A549 (cell line): ENCODE measurements at regions of chr5 and their contacts with region 1.

Region 1: GRCh38 chr5:10627160-10627701 is 63.4 kb downstream of the ANKRD33B start:
- DNase-seq: no peak
- ATAC-seq: peak; percentile 33 to 43; a peak in 5 of 6 replicates
- H3K4me3 ChIP-seq: peak overlapping the region; percentile 24
- H3K27ac ChIP-seq: peak overlapping the region; percentile 51 to 80
- H3K4me1 ChIP-seq: peaks cover 17% of the 10 kb centered on the region
- CTCF ChIP-seq: no peak
- EP300 ChIP-seq: no peak
- POLR2A ChIP-seq: no peak
- RAD21 ChIP-seq: no peak

Region 2: DNA sequence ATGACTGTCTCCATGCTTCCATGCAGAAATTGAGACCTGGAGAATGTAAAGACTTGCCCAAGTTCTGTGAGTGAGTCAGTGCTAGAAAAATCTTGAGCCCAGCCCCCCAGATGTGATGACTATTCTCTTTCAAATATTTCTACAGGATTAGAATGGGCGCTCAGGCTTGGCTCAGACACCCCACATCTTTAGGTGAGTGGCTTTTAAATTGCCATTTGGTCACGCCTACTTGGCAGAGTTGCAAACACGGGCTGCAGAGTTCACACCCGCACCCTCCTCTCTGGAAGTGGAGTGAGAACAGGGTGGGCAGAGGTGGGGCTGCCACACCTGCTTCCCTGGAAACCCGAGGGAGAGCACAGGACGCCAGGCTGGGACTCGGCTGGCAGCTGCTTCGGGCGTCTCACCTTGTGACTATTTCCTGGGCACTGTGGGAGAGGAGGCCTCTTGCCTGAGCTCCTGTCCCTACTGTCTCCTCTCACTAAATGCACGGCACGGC is 148.0 kb before region 1 on chr5:
- CTCF ChIA-PET with region 1: interaction called, 18 read pairs
- POLR2A ChIA-PET with region 1: no interaction called
- DNase-seq: peak; percentile 53 to 65
- ATAC-seq: peak; percentile 79 to 83
- H3K4me3 ChIP-seq: no peak overlapping the region
- H3K27ac ChIP-seq: peak overlapping the region; percentile 51 to 78
- H3K4me1 ChIP-seq: peaks cover 45% of the 10 kb centered on the region
- CTCF ChIP-seq: no peak
- EP300 ChIP-seq: no peak
- POLR2A ChIP-seq: no peak
- RAD21 ChIP-seq: 0 out of 5 replicates have a peak, but pooled peaks of 1 of the 2 experiments have one; percentile 20

Region 3: DNA sequence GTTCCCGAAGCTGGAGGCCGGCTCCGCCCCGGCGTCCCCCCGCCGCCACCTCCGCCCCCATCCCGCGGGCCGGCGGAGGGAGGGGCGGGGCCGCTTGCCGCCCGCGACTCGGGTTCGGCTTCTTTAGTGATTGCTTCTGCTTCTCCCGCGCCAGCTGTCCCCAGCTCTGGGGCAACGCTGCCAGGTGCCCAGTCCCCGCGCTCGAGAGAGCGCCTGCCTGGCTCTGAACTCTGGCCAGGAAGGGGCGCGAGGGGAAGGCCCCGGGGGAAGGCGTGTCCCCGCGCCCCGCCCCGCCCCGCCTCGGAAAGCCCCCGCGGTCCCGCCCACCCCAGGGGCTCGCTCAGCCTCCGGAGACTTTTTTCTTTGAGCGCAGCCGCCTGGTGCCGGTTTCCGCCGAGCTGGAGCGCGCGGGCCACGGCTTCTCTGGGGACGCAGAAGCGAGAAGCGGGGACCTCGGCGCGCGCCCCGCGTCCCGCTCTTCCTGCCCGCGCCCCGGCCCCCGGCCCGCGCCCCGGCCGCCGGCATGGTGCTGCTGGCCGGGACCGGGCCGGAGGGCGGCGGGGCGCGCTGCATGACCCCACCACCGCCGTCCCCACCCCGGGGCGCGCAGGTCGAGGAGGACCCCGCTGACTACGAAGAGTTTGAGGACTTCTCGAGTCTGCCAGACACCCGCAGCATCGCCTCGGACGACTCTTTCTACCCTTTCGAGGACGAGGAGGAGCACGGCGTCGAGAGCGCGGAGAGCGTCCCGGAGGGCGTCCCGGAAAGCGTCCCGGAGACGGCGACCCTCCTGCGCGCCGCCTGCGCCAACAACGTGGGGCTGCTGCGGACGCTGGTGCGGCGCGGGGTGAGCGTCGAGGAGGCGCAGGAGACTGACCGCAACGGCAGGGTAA is 63.0 kb before region 1 on chr5 and contains the start of gene ANKRD33B:
- CTCF ChIA-PET with region 1: interaction called, 35 read pairs
- POLR2A ChIA-PET with region 1: interaction called, 7 read pairs
- DNase-seq: peak; percentile 63 to 77
- ATAC-seq: peak; percentile 68 to 69
- H3K4me3 ChIP-seq: peak within 1 kb of the TSS; percentile 89
- H3K27ac ChIP-seq: peak within 1 kb of the TSS; percentile 85 to 99
- H3K4me1 ChIP-seq: peaks cover 46% of the 10 kb centered on the region
- CTCF ChIP-seq: no peak
- EP300 ChIP-seq: no peak
- POLR2A ChIP-seq: peak; percentile 55
- RAD21 ChIP-seq: peak in 1 of 2 experiments; percentile 14; a peak in 1 of 5 replicates
- polyA plus RNA-seq, gene ANKRD33B: 6.9 and 8.2 TPM in 2 replicates

Region 4: DNA sequence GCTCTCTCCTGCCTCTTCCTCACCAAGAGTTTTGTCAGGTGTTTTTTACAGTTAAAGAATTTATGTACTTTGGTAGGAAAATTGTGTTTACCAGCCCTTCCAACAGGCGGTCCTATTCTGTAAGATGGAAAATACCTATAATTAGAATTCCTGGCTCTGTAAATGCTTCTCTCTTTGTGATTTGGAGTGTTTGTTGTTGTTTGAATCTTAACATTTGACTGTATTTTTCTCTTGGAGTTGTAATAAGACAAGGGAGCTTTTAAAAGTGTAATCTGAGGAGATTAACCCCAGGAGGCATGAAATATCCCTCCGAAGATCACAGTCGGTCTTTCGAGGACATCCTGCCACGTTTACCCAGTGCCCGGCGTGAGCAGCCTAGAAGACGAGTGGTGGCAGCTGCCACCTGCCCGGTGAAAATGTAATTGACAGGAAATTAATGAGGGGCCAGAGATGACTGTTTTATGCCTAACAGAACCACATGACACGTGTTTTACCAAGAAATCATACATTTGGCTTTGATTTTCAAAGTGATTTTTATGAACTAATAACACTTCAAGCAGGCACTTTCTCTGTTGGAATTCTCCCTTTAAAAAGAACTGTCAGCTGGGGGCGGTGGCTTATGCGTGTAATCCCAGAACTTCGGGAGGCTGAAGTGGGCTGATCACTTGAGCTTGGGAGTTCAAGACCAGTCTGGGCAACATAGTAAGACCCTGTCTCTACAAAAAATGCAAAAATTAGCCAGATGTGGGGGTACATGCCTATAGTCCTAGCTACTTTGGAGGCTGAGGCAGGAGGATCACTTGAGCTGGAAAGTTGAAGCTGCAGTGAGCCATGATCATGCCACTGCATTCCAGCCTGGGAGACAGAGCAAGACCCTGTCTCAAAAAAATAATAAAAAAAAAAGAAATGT is 43.3 kb before region 1 on chr5:
- CTCF ChIA-PET with region 1: interaction called, 14 read pairs
- POLR2A ChIA-PET with region 1: no interaction called
- DNase-seq: no peak
- ATAC-seq: no peak
- H3K4me3 ChIP-seq: no peak overlapping the region
- H3K27ac ChIP-seq: no peak overlapping the region
- H3K4me1 ChIP-seq: peaks cover 14% of the 10 kb centered on the region; the same call in 2 of the 3 replicates
- CTCF ChIP-seq: no peak
- EP300 ChIP-seq: no peak
- POLR2A ChIP-seq: no peak
- RAD21 ChIP-seq: no peak

Region 5: DNA sequence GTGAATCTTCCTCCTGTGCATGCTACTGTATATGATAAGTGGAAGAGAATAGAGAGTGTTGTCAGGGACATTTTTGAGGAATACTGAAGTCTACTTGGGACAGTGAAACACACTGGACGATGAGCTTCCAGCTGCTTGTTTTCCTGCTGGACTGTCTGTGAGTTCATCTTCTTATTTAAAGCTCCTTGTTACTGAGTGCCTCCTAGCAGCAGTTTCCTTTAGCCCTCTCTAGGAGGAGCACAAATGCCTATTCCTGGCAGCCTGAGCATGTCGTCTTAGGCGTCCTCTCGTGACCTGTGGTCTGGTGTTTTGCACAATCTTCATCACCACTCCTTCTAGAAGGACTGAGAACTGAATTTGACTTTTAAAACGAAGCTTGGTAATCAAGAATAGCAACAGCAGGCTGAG is 19.6 kb before region 1 on chr5:
- CTCF ChIA-PET with region 1: interaction called, 55 read pairs
- POLR2A ChIA-PET with region 1: no interaction called
- DNase-seq: peak in 1 of 2 experiments; percentile 63
- ATAC-seq: peak; percentile 71 to 75; a peak in 4 of 6 replicates
- H3K4me3 ChIP-seq: no peak overlapping the region
- H3K27ac ChIP-seq: 0 out of 6 replicates have a peak overlapping the region, but pooled peaks of 1 of the 2 experiments have one; percentile 27
- H3K4me1 ChIP-seq: peaks cover 18% of the 10 kb centered on the region
- CTCF ChIP-seq: no peak
- EP300 ChIP-seq: no peak
- POLR2A ChIP-seq: no peak
- RAD21 ChIP-seq: no peak

Region 6: DNA sequence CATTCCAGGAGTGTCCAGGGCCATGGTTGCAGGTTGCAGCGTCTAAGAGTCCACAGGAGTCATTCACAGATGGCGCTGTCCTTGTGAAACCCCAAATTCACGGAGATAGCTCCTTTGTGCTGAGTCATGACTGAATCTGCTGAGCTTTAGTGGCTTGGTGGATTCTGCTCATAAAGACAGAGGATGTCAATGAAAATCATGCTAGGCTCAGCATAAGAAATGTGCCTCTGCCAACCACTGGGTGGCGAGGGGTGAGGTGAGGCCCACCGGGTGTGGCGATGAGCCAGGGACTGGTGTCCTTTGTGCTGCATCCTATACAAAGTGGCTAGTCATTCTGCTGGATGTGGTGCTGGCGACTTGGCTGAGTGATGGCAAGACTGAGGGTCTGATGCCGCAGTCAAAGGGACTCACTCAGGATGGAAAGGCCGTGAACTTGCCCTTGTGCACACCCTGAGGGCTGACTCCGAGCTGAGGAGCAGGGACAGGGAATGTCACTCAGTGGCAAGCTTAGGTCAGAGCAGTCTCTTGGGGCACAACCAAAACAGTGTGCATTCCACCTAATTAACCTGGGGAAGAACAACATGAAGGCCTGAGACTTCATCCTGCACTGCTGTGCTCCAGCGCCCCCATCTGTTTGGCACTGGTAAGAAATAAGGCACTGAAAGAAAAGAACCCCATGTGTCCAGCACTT is 62.3 kb after region 1 on chr5:
- CTCF ChIA-PET with region 1: interaction called, 17 read pairs
- POLR2A ChIA-PET with region 1: no interaction called
- DNase-seq: peak; percentile 64 to 67
- ATAC-seq: peak; percentile 74 to 90; a peak in 5 of 6 replicates
- H3K4me3 ChIP-seq: no peak overlapping the region
- H3K27ac ChIP-seq: peak overlapping the region; percentile 62 to 77; a peak in 5 of 6 replicates
- H3K4me1 ChIP-seq: peaks cover 21% of the 10 kb centered on the region
- CTCF ChIP-seq: peak; percentile 30
- EP300 ChIP-seq: no peak
- POLR2A ChIP-seq: no peak
- RAD21 ChIP-seq: peak; percentile 24 to 72; a peak in 3 of 5 replicates

Region 7: GRCh38 chr5:10975945-10976344 is 348.7 kb after region 1 on chr5:
- CTCF ChIA-PET with region 1: no interaction called
- POLR2A ChIA-PET with region 1: no interaction called
- DNase-seq: no peak
- ATAC-seq: no peak
- H3K4me3 ChIP-seq: no peak overlapping the region
- H3K27ac ChIP-seq: no peak overlapping the region
- H3K4me1 ChIP-seq: no peaks in the 10 kb centered on the region
- CTCF ChIP-seq: no peak
- EP300 ChIP-seq: no peak
- POLR2A ChIP-seq: no peak
- RAD21 ChIP-seq: no peak